ENCODE measurements at regions of chr17 and their contacts with region 1.

Region 1: DNA sequence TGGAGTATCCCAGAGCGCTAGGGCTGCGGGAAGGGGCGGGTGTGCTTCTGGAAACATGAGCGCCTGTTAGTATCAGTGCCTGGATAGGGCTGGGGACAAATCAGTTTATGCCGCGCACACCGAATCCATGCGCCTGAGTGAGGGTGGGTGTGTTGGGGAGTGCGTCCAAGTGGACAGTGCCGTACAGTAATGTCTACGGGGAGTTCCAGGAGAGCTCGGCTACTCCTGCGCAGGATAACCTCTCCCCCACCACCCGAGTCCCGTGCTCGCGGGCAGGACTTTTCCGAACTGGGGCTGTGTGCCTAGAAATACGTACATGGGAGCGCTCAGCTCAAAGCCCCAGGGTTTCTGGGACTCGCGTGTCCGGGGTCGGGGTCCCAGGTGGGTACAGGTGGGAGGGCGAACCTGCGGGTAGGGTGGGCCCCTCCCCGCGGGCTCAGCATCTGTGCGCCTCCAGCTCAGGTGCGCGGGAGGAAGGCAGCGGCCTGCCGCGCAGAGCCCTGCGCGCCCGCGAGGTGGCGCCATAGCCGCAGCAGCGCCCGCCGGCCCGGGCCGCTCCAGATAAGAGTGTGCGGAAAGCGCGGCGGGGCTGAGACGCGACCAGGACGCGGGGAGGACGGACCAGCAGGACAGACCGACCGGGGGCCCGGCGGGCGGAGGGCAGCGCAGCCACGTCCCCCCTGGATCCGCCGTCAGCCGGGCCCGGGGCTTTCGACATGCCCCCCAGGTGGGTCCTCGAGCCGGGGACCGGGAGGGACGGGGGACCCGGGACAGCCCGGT is at the start of gene HIC1:
- DNase-seq: peak; percentile 89
- ATAC-seq: peak; percentile 62
- H3K4me3 Mint-ChIP-seq: peak within 1 kb of the TSS; percentile 69
- H3K27ac Mint-ChIP-seq: no peak within 1 kb of the TSS
- H3K4me1 Mint-ChIP-seq: peaks cover 21% of the 10 kb centered on the region
- H3K27me3 Mint-ChIP-seq: peaks cover 18% of the 10 kb centered on the region
- total RNA-seq, gene HIC1: 13.6 to 16.5 TPM

Region 2: DNA sequence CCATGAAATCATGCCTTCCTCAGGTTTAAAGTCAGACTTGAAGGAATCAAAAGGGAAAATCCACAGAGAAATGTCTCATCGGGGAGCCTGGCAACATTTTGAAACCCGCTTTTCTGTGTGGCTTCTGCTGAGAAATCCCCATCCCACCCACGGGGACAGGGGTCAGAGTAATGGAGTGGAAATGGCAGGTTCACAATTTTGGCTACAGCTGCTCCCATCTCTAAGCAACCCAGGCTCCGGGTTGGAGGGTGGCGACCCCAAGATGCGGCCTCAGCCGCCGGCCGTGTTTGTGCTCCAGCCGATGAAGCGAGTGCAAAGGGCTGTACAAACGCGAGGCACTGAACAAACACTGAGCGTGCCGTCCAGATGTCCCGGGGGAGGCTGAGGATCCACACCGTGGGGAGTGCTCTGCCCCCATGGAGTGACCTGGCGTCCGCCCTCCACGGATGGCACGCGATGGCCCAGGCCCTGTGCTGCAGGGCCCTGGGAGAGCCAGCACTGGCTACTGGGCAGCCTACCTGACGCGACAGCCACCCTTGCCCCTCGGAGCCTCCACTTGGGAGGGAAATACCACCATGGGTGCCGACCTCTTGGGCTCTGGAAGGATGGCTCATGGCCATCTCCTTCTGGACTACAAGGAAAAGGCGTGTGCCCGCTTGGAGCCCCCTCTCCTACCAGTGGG is 448.2 kb before region 1 on chr17:
- CTCF ChIA-PET with region 1: no interaction called
- POLR2A ChIA-PET with region 1: no interaction called
- intact Hi-C with region 1: no loop called
- DNase-seq: peak; percentile 67
- ATAC-seq: no peak
- H3K4me3 Mint-ChIP-seq: peak overlapping the region; percentile 21
- H3K27ac Mint-ChIP-seq: peak overlapping the region; percentile 85
- H3K4me1 Mint-ChIP-seq: peaks cover 25% of the 10 kb centered on the region
- H3K27me3 Mint-ChIP-seq: no peaks in the 10 kb centered on the region

Region 3: DNA sequence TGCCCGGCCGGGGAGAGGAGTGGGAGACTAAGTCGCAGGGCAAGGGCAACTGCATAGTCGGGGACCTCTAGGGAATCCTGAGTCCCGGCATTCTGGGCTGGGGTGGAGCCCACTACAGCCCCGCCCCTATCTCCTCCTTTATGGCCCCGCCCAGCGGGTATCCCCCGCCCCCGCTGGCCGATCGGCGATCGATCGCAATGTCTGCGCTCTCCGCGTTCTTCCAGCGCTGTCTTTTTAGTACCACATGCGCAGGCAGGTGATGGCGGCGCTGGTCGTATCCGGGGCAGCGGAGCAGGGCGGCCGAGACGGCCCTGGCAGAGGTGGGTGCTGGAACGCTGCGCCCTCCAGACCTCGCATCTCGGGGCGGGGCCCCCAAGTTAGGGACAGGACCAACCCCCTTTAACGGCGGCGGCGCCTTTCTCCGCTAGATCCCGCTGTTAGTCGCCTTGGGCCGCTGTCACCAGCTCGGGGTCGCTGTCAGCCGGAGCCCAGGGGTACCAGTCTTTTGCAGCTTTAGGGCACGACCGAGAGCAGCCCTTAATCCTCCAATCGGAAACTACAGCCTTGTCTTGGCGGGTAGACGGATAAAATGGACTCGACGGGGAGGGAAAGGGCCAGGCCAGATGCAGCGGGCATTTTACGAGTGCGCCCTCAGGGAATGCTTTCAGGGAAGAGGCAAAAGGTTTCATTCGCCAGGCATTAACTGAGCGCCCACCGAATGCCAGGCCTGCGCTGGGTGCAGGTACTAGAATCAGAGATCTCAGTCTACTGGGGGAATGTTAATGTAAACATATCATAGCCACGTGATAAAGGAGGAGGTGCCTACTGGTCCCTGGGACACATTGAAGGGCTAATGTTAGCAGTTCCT is 24.6 kb before region 1 on chr17 and contains the start of gene DPH1:
- CTCF ChIA-PET with region 1: interaction called, 4 read pairs
- POLR2A ChIA-PET with region 1: no interaction called
- intact Hi-C with region 1: loop called in 1 of 2 experiments (anchors 1 kb)
- DNase-seq: peak; percentile 94
- ATAC-seq: peak; percentile 91
- H3K4me3 Mint-ChIP-seq: peak within 1 kb of the TSS; percentile 88
- H3K27ac Mint-ChIP-seq: peak within 1 kb of the TSS; percentile 78
- H3K4me1 Mint-ChIP-seq: peaks cover 24% of the 10 kb centered on the region
- H3K27me3 Mint-ChIP-seq: peaks cover 20% of the 10 kb centered on the region
- total RNA-seq, gene DPH1: 29.1 to 37.0 TPM

Region 4: DNA sequence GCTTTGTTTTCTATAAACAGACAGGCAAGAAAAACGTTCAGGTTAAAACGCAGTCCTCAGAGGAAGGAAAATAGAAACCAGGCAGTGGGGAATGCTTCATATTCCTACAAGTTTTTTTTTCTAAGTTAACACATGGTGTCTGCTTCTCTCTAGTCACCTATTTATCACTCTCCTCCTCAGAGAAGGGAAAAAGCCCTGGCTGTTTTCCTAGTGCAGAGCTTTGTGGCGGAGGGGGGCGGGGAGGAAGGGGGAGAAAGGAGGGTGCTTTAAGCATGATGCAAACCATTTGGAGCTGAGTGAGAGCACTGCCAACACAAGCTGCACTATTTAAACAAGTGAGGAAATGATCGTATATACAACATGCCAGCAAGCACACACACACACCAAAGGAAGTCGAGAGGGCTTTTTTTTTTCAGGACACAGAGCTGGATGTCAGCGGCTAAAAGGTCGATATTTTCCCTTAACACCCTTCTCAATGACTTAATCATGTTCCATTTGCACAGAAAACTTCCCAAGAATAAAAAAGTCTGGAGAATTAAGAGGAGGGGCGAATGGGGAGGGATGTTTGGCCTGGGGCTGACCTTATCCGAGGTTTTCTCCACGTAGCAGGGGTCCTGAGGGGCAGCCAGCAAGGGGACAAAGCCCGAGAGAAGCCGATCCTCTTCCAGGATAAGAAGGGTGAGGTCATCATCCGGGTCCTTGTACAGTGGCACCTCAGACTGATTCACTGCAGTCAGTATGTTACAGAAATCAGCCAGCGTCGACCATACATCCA is 117.6 kb after region 1 on chr17:
- CTCF ChIA-PET with region 1: interaction called, 5 read pairs
- POLR2A ChIA-PET with region 1: no interaction called
- intact Hi-C with region 1: loop called (anchors 2 to 5 kb)
- DNase-seq: no peak
- ATAC-seq: no peak
- H3K4me3 Mint-ChIP-seq: no peak overlapping the region
- H3K27ac Mint-ChIP-seq: no peak overlapping the region
- H3K4me1 Mint-ChIP-seq: no peaks in the 10 kb centered on the region
- H3K27me3 Mint-ChIP-seq: no peaks in the 10 kb centered on the region

Region 5: DNA sequence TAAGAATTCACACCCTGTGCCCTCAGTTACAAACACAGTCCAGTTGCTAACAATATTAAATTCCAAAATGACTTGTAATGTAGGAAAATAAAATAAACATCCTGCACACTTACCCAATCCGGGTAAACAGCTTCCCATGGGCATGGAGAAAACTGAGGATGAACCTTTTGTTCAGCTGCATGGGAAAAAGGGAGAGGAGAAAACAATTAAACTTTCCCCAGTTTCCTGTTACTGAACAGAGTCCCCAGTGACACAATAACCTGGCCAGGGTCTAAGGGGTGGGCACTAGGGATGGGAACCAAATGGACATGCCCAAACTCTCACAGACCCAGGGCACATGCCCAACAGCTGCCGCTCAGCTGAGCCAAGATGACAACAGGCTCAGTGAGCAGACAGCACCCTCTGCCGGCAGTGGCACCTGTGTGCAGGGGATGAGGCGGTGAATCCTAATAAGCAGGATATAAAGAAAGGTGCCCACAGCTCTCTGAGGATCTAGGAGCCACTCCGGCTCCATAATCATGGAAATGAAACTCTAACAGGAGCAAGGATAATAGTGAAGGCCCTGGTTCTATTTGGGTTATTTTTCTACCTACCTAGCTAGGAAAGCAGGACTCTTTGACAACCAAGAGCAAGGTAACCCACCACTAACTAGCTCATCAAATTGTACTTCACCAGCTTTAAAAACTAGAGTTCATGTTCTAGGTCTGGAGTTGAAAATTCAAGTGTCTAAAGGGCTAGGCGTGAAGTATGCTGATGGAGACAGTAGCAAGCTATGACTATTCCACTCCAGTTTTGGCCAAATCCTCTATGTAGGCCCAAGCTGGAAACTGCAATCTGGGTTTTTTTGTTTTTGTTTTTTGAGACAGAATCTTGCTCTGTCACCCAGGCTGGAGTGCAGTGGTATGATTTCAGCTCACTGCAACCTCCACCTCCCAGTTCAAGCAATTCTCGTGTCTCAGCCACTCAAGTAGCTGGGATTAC is 190.1 kb after region 1 on chr17:
- CTCF ChIA-PET with region 1: interaction called, 87 read pairs
- POLR2A ChIA-PET with region 1: interaction called, 4 read pairs
- intact Hi-C with region 1: loop called (anchors 1 kb)
- DNase-seq: peak; percentile 92
- ATAC-seq: peak; percentile 80
- H3K4me3 Mint-ChIP-seq: no peak overlapping the region
- H3K27ac Mint-ChIP-seq: no peak overlapping the region
- H3K4me1 Mint-ChIP-seq: peaks cover 41% of the 10 kb centered on the region
- H3K27me3 Mint-ChIP-seq: no peaks in the 10 kb centered on the region

Region 6: DNA sequence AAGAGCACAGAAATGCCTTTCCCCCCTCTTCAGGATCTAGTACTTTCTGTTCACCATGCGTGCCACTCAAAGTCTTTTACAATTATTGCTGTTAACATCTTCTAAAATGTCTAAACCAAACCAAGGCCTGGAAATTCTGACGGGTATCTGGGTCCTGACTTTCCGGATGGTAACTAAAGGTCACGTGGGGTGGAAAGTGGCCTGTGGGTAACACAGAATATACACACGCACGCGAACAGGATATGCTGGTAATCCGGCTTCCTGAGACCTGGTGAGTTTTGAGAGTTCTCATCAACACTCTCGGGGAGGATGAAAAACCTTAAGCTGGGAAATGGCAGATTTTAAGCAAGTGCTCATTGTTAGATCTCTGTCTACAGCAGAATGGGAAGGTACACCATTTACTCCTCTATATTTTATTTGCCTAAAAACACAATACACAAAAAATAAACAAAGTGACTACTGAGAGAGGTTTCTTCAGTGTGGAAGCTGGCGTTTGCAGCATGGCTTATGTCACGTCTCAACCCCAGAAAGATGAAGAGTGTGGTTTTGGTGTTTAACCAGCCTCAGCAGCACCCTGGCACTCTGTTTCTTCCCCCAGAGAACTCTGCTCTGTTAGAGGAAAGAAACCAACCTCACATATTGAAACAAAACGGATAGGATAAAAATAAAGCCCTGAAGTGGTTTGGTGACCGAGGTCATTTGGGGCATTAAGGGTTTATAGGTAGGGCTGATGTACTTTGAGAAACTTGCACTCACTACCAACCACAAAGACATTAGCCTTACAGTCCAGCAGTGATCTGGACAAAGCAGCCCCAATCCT is 211.6 kb after region 1 on chr17:
- CTCF ChIA-PET with region 1: interaction called, 4 read pairs
- POLR2A ChIA-PET with region 1: interaction called, 4 read pairs
- intact Hi-C with region 1: loop called (anchors 1 to 5 kb)
- DNase-seq: peak; percentile 93
- ATAC-seq: peak; percentile 76
- H3K4me3 Mint-ChIP-seq: peak overlapping the region; percentile 72
- H3K27ac Mint-ChIP-seq: peak overlapping the region; percentile 98
- H3K4me1 Mint-ChIP-seq: peaks cover 86% of the 10 kb centered on the region
- H3K27me3 Mint-ChIP-seq: no peaks in the 10 kb centered on the region

Region 7: DNA sequence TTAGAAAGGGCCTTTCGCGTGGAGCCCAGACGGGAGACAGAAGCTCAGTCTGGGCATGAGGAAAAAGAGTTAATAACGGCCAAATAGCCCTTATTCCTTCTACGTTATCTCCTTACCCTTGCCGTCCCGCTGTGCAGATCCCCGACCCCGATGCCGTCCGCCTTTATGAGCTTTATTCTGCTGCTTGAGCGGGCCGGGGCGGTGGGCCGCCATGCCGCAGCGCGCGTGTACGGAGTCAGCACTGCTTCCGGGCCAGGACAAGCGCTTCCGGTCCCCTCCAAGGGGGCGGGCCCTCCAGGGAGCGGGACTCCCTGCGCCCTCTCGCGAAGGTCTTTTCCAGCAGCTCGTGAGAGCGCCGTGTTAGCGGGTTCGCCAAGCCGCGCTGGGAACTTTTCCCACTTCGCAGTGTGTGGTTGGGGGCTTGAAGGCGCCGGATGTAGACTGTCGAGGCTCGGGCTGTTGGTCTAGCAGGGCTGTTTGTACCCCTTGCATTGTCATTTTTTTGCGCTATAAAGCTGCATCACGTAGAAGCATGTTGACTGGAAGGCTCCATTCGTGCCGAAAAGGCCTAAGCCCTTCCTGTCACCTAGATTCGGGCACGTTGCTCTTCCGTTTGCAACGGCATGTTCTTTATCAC is 281.6 kb after region 1 on chr17 and contains the start of gene TSR1:
- CTCF ChIA-PET with region 1: interaction called, 3 read pairs
- POLR2A ChIA-PET with region 1: no interaction called
- intact Hi-C with region 1: loop called (anchors 1 to 5 kb)
- DNase-seq: peak; percentile 94
- ATAC-seq: peak; percentile 93
- H3K4me3 Mint-ChIP-seq: no peak within 1 kb of the TSS
- H3K27ac Mint-ChIP-seq: peak within 1 kb of the TSS; percentile 99
- H3K4me1 Mint-ChIP-seq: peaks cover 14% of the 10 kb centered on the region
- H3K27me3 Mint-ChIP-seq: no peaks in the 10 kb centered on the region
- total RNA-seq, gene TSR1: 59.3 to 77.0 TPM

Region 8: GRCh38 chr17:2711601-2712299 is 657.0 kb after region 1 on chr17 and contains the start of gene CLUH:
- CTCF ChIA-PET with region 1: no interaction called
- POLR2A ChIA-PET with region 1: no interaction called
- intact Hi-C with region 1: loop called in 1 of 2 experiments (anchors 5 kb)
- DNase-seq: peak; percentile 98
- ATAC-seq: peak; percentile 95
- H3K4me3 Mint-ChIP-seq: peak within 1 kb of the TSS; percentile 86
- H3K27ac Mint-ChIP-seq: peak within 1 kb of the TSS; percentile 84
- H3K4me1 Mint-ChIP-seq: peaks cover 35% of the 10 kb centered on the region
- H3K27me3 Mint-ChIP-seq: no peaks in the 10 kb centered on the region
- total RNA-seq, gene CLUH: 107 to 123 TPM